ENCODE measurements at regions of chr2 and their contacts with region 1.

Region 1: GRCh38 chr2:124339709-124340108 is 314.6 kb downstream of the CNTNAP5 start:
- DNase-seq: no peak

Region 2: DNA sequence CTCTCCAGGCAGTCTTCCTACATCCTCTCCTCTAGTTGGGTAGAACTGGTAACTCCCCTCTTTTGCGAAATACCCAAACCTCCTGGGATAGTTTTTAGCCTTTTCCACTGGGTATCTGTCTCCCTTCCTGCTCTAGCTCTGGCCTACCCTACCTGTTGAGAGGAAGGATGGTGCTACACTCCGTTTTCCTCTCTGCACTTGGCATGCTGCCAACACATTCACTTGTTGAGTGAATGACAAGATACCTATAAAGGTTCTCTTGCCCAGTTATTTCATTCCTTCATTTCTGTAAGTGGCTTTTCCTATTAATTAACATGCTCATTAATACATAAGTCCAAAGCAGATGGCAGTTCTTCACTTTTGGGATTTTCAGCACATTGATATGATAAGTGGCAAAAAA is 20.8 kb before region 1 on chr2:
- intact Hi-C with region 1: loop called (anchors 2 kb)
- DNase-seq: no peak

Region 3: GRCh38 chr2:124380221-124380749 is 40.6 kb after region 1 on chr2:
- intact Hi-C with region 1: no loop called
- DNase-seq: no peak

Region 4: GRCh38 chr2:124437811-124438210 is 98.1 kb after region 1 on chr2:
- intact Hi-C with region 1: no loop called
- DNase-seq: no peak

Region 5: DNA sequence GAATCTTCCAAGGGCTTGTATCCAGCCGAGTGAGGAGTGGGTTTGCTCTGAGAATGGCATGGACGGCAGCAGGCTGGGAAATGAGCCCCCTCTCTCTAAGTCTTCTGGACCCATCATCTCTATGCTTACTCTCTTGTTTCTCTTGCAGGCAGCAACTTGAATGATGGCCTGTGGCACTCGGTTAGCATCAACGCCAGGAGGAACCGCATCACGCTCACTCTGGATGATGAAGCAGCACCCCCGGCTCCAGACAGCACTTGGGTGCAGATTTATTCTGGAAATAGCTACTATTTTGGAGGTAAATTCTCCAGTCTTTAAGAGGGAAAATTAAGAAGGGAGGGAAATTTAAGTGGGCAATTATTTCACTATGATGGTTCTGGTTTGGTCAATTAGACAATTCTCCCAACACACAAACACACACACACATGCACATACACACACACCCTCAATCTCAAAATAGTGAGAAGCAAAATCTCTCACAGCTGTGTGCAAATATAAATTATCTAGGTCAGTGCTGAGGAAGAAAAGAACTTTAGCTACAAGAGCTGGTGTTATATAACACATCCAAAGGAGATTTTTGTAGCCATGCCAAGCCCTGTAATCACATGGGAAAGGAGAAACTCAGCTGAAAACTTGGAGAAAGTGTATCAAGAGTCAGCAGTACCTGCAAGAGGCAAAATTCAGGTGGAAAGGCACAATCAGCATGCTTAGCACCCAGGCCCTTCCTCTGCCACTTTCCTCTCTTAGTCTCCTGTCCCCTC is 184.6 kb after region 1 on chr2:
- intact Hi-C with region 1: no loop called
- DNase-seq: peak in 6 of 10 donors; percentile 26 to 88 (median 46)